Endothelial cell of umbilical vein (primary cell): ENCODE measurements at regions of chr19 and their contacts with region 1.

Region 1: GRCh38 chr19:12766051-12766521 is 9.3 kb downstream of the HOOK2 start:
- DNase-seq: peak; percentile 88
- H3K4me3 ChIP-seq: peak overlapping the region in 2 of 3 experiments; percentile 34 to 44
- H3K27ac ChIP-seq: no peak overlapping the region
- H3K4me1 ChIP-seq: no peaks in the 10 kb centered on the region
- H3K27me3 ChIP-seq: no peaks in the 10 kb centered on the region
- CTCF ChIP-seq: peak; percentile 32 to 95
- POLR2A ChIP-seq: no peak

Region 2: DNA sequence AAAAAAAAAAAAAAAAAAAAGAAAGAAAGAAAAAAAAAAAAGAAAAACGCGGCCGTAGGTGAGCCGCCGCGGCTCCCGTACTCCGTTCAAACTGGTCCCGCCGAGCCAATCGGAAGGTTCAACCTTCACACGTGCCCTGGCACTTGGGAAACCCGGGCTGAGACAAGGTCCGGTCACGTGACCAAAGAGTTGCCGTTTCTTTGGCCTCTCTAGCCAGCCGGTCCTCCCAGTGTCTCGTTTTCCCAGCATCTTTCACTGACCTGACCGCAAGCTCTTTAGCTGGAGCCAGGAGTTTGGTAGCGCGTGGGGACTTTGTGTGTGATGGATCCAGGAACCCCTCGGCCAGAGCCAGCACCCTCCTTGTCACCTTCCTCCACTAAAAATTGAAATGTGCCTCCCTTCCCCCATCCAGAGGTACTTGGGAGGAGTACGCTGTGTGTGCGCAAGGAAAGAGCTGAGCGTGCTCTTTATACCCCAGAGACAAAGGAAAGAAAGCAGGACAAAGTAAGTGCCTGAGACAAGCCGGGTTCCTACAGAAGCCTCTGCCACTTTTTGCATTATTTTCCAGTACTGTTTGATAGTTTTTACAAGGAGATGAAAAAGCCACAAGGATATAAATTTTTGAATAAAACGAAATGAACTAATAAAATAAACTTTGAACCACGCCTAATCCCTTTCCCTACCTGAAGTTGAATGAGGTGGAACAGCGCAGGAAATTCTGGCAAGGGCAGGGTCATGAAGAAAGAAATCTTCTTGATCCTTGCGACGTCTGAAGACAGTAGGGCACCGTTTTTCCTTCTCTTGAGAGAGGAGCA is 43.3 kb before region 1 on chr19:
- CTCF ChIA-PET with region 1: interaction called, 19 read pairs
- POLR2A ChIA-PET with region 1: no interaction called
- dilution Hi-C with region 1: no loop called
- intact Hi-C with region 1: no loop called
- DNase-seq: peak; percentile 97
- H3K4me3 ChIP-seq: peak overlapping the region; percentile 62 to 88 (median 62)
- H3K27ac ChIP-seq: peak overlapping the region; percentile 57
- H3K4me1 ChIP-seq: peaks cover 10% of the 10 kb centered on the region
- H3K27me3 ChIP-seq: no peaks in the 10 kb centered on the region
- CTCF ChIP-seq: no peak
- POLR2A ChIP-seq: peak; percentile 62

Region 3: GRCh38 chr19:12789904-12790619 is 24.0 kb after region 1 on chr19:
- CTCF ChIA-PET with region 1: interaction called, 524 read pairs
- POLR2A ChIA-PET with region 1: interaction called, 13 read pairs
- dilution Hi-C with region 1: no loop called
- intact Hi-C with region 1: no loop called
- DNase-seq: peak; percentile 91
- H3K4me3 ChIP-seq: peak overlapping the region; percentile 16 to 44 (median 37)
- H3K27ac ChIP-seq: peak overlapping the region; percentile 65
- H3K4me1 ChIP-seq: peaks cover 35% of the 10 kb centered on the region
- H3K27me3 ChIP-seq: no peaks in the 10 kb centered on the region
- CTCF ChIP-seq: no peak
- POLR2A ChIP-seq: no peak

Region 4: DNA sequence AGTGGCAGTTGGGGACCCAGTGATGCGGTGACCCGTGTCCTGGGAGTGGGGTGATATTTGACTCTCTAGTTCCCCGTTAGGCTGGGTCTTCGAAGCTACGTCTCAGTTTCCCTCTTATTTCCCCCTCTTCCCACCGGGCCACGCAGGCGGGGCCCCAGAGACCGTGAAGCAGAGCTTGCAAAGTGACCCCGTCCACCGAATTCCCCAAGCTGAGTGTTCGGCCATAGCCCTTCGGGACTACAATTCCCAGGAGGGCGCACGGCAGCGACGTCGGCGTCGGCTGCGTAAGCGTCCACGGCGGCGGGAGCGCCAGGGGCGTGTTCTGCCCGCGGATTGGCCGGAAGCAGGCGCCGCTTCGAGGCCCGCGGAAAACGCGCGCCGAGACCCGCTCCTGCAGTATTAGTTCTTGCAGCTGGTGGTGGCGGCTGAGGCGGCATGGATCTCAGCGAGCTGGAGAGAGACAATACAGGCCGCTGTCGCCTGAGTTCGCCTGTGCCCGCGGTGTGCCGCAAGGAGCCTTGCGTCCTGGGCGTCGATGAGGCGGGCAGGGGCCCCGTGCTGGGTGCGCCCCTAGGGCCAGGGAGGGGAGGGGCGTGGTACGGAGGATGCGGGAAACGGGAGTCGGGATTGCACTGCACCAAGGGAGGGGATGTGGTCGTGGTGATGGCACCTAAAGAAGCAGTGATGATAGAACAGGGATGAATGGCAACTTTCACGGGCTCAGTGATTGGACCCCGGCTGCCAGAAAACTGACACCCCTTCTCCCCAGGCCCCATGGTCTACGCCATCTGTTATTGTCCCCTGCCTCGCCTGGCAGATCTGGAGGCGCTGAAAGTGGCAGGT is 40.4 kb after region 1 on chr19 and contains the start of gene RNASEH2A:
- CTCF ChIA-PET with region 1: interaction called, 524 read pairs
- POLR2A ChIA-PET with region 1: no interaction called
- dilution Hi-C with region 1: no loop called
- intact Hi-C with region 1: no loop called
- DNase-seq: peak; percentile 88
- H3K4me3 ChIP-seq: peak within 1 kb of the TSS; percentile 21 to 48 (median 44)
- H3K27ac ChIP-seq: no peak within 1 kb of the TSS
- H3K4me1 ChIP-seq: peaks cover 15% of the 10 kb centered on the region
- H3K27me3 ChIP-seq: no peaks in the 10 kb centered on the region
- CTCF ChIP-seq: no peak
- POLR2A ChIP-seq: peak; percentile 73
- total RNA-seq, gene RNASEH2A: 25.6 and 28.5 TPM in 2 replicates